Activated CD8-positive, alpha-beta T cell treated with anti-CD3 and anti-CD28 coated beads for 36 hours (primary cell): ENCODE measurements at regions of chr4 and their contacts with region 1.

Region 1: DNA sequence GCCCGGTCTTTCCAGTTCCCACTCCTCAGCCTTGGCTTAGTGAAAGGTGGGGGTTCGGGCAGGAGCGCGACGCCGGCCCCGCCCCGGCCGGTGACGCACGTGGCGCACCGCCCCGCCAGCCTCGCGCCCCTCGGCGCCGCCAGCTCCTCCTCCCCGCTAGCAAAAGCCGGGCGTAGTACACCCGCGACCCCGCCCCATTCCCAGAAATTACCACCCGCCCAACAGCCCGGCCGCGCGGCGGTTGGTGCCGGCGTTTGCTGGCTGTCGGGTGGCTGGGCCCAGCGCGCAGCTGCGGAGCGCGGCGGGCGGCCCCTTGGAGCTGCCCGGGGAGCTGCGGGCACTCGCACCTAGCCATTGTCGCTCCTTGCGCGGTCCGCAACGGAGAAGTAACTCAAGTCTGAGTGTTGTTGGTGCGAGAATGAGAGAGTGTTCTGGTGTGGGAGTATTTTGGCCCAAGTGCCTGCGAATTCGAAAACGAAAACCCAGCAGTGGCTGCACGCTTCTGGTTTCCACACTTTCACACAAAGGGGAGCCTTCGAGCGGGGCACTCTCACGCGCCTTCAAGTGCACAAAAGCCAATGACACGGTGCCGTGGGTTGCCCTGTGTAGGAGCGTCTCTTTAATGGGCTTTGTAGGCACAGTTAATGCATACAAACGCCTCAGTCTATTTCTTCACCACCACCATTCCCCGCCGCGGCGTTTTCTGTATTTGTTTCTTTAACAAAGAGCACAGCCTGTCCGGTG is 1.0 kb upstream of the ELF2 start:
- DNase-seq: peak; percentile 91
- ATAC-seq: peak; percentile 81
- H3K4me3 Mint-ChIP-seq: peak overlapping the region; percentile 82
- H3K27ac Mint-ChIP-seq: peak overlapping the region; percentile 85
- H3K4me1 Mint-ChIP-seq: peaks cover 13% of the 10 kb centered on the region
- H3K27me3 Mint-ChIP-seq: peaks cover 14% of the 10 kb centered on the region
- CTCF ChIP-seq: no peak

Region 2: DNA sequence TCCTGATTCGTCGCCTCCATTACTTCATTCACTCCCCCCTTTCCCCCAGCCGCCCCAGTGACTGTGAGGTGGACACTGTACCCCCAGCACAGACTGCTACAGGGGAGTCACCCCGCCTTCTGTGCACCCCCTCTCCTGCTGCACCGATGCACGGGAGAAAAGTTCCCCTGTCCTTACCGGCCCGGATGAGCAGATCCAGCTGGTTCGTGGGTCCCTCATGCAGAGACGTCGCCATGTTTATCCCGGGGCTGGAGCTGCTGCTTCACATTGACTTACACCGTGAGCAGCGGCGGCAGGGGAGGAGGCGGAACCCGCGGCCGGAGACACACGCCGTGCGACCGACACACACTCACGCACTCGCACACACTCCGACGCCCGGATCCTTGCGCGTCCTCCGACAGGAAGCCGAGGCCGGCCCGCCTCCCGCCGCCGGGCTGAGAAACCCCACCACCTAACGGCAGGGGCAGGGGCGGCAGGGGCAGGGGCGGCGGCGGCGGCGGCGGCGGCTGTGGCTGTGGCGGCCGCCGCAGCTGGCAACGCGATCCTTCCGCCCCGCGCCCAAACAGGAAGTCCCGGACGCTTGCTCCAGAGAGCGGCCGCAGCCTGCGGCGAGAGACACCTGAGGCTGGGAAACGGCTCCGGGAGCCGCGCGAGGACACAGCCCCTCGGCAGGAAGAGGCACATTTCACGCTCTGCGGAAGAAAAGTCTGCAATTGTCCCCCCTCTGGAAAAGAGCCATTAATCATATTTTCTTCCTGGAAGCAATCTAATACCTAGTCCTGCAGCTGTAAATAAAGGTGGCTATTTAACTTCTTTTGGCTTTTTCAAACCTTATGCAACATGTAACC is 93.9 kb before region 1 on chr4:
- CTCF ChIA-PET with region 1: no interaction called
- POLR2A ChIA-PET with region 1: no interaction called
- intact Hi-C with region 1: loop called (anchors 5 kb)
- DNase-seq: peak; percentile 88
- ATAC-seq: peak; percentile 49
- H3K4me3 Mint-ChIP-seq: peak overlapping the region; percentile 100
- H3K27ac Mint-ChIP-seq: peak overlapping the region; percentile 100
- H3K4me1 Mint-ChIP-seq: peaks cover 25% of the 10 kb centered on the region
- H3K27me3 Mint-ChIP-seq: no peaks in the 10 kb centered on the region
- CTCF ChIP-seq: no peak

Region 3: DNA sequence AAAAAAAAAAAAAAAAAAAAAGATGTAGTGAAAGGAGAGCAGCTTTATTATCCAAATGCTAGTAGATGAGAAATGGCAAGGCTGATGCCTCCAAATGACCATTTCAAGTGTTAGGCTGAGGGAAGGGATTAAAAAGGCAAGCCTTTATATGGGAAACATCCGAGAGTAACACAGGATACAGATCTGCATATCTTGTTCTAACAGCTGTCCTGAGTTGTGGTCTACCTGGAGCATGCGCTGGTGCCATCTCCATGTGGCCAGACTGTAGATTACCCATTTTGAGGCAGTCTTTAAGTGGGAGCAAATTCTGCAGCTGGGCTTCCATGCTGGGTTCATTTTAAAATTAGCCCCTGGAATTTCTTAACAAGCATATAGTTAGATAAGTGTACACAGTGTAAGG is 25.0 kb after region 1 on chr4:
- CTCF ChIA-PET with region 1: no interaction called
- POLR2A ChIA-PET with region 1: no interaction called
- intact Hi-C with region 1: no loop called
- DNase-seq: no peak
- ATAC-seq: no peak
- H3K4me3 Mint-ChIP-seq: no peak overlapping the region
- H3K27ac Mint-ChIP-seq: no peak overlapping the region
- H3K4me1 Mint-ChIP-seq: no peaks in the 10 kb centered on the region
- H3K27me3 Mint-ChIP-seq: peaks cover 3% of the 10 kb centered on the region
- CTCF ChIP-seq: no peak